Activated naive CD4-positive, alpha-beta T cell treated with anti-CD3 and anti-CD28 coated beads for 36 hours (primary cell): ENCODE measurements at regions of chr10 and their contacts with region 1.

Region 1: DNA sequence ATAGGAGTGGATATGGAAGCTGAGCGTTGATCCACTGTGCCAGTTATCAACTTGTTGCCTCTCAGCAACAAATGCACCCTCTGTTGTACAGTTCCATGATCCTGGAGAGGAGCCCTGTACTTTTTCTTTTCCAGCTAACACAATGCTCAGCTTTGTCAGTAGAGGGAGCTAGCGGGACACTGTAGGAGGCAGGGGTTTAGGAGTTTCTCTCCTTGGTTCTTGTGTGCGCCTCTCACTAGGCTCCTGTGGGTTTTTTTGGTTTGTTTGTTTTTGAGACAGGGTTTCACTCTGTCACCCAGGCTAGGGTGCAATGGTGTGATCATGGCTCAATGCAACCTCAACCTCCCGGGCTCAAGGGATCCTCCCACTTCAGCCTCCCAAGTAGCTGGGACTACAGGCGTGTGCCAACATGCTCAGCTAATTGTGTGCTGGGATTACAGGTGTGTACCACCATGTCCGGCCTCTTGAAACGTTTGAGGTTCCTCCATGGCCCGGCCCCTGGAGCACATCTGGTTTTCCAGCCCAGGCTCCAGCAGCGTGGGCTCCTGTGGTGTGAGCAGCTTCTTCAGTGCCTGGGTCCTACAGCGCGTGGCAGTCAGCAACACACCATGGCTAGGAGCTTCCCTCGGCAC is 12.0 kb upstream of the MARVELD1 start:
- DNase-seq: peak; percentile 67
- H3K4me3 Mint-ChIP-seq: no peak overlapping the region
- H3K27ac Mint-ChIP-seq: no peak overlapping the region
- H3K4me1 Mint-ChIP-seq: no peaks in the 10 kb centered on the region
- H3K27me3 Mint-ChIP-seq: peaks cover 1% of the 10 kb centered on the region

Region 2: DNA sequence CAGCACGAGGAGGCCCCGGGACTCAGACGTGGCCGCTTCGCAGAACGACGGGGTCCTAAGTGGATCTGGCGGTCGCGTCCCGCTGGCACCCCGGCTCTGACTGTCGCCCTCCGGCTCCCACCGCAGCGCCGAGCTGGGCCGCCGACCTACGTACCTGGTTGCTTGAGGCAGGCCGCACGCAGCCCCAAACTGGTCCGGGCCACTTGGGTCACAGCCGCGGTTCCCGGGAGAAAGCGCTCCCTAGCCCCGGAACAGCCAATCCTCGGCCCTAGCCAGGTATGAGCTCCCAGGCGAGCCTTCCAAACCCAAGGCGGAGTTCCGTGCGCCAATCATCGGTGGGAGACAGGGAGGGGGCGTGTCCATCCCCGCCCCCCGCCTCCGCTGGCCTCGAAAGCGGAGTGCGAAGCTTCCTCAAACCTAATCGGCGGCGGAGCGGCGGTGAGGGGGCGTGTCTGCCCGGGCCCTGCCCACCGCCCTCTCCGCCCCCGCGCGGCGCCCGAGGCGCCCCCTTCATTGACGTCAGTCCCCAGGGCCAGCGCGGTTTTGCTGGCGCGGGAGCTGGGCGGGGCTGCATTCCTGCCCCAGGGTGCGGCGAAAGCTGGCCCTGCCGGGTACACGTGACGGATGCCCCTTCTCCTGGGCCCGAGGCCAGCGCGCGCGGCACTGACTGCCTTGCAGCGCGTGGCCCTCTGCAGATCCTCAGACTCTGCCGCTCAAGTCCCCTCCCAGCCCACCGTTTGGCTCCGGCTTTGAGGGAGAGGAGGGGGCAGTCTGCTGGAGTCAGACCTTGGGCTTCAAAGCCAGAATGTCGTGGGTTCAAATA is 14.4 kb before region 1 on chr10 and contains the start of gene AVPI1:
- CTCF ChIA-PET with region 1: interaction called, 33 read pairs
- intact Hi-C with region 1: no loop called
- DNase-seq: peak; percentile 96
- H3K4me3 Mint-ChIP-seq: peak within 1 kb of the TSS; percentile 81
- H3K27ac Mint-ChIP-seq: no peak within 1 kb of the TSS
- H3K4me1 Mint-ChIP-seq: peaks cover 12% of the 10 kb centered on the region
- H3K27me3 Mint-ChIP-seq: no peaks in the 10 kb centered on the region
- total RNA-seq, gene AVPI1: 1.5 to 1.9 TPM

Region 3: GRCh38 chr10:97731346-97732051 is 29.9 kb after region 1 on chr10:
- CTCF ChIA-PET with region 1: interaction called, 178 read pairs
- intact Hi-C with region 1: loop called (anchors 1 kb)
- DNase-seq: peak; percentile 79
- H3K4me3 Mint-ChIP-seq: no peak overlapping the region
- H3K27ac Mint-ChIP-seq: no peak overlapping the region
- H3K4me1 Mint-ChIP-seq: peaks cover 6% of the 10 kb centered on the region
- H3K27me3 Mint-ChIP-seq: no peaks in the 10 kb centered on the region

Region 4: GRCh38 chr10:97743169-97743943 is 41.8 kb after region 1 on chr10:
- CTCF ChIA-PET with region 1: interaction called, 14 read pairs
- intact Hi-C with region 1: no loop called
- DNase-seq: no peak
- H3K4me3 Mint-ChIP-seq: no peak overlapping the region
- H3K27ac Mint-ChIP-seq: no peak overlapping the region
- H3K4me1 Mint-ChIP-seq: peaks cover 31% of the 10 kb centered on the region
- H3K27me3 Mint-ChIP-seq: no peaks in the 10 kb centered on the region

Region 5: GRCh38 chr10:98778277-98778759 is 1076.8 kb after region 1 on chr10:
- CTCF ChIA-PET with region 1: no interaction called
- intact Hi-C with region 1: no loop called
- DNase-seq: no peak
- H3K4me3 Mint-ChIP-seq: no peak overlapping the region
- H3K27ac Mint-ChIP-seq: no peak overlapping the region
- H3K4me1 Mint-ChIP-seq: no peaks in the 10 kb centered on the region
- H3K27me3 Mint-ChIP-seq: peaks cover 6% of the 10 kb centered on the region